Heart left ventricle (tissue), 16 donors: ENCODE measurements at regions of chr6 and their contacts with region 1.

Region 1: GRCh38 chr6:158231551-158232315 is 63.6 kb downstream of the GTF2H5 start:
- DNase-seq: peak; percentile 75 to 88 (median 78)
- ATAC-seq: peak; percentile 52 to 84 (median 72)
- H3K4me3 ChIP-seq: peak overlapping the region; percentile 54 to 95 (median 77)
- H3K27ac ChIP-seq: peak overlapping the region; percentile 63 to 92 (median 82)
- H3K4me1 ChIP-seq: peaks cover 0 to 22% (median 15%) of the 10 kb centered on the region in 12 donors
- H3K27me3 ChIP-seq: no peaks in the 10 kb centered on the region
- CTCF ChIP-seq: no peak
- POLR2A ChIP-seq: no peak

Region 2: DNA sequence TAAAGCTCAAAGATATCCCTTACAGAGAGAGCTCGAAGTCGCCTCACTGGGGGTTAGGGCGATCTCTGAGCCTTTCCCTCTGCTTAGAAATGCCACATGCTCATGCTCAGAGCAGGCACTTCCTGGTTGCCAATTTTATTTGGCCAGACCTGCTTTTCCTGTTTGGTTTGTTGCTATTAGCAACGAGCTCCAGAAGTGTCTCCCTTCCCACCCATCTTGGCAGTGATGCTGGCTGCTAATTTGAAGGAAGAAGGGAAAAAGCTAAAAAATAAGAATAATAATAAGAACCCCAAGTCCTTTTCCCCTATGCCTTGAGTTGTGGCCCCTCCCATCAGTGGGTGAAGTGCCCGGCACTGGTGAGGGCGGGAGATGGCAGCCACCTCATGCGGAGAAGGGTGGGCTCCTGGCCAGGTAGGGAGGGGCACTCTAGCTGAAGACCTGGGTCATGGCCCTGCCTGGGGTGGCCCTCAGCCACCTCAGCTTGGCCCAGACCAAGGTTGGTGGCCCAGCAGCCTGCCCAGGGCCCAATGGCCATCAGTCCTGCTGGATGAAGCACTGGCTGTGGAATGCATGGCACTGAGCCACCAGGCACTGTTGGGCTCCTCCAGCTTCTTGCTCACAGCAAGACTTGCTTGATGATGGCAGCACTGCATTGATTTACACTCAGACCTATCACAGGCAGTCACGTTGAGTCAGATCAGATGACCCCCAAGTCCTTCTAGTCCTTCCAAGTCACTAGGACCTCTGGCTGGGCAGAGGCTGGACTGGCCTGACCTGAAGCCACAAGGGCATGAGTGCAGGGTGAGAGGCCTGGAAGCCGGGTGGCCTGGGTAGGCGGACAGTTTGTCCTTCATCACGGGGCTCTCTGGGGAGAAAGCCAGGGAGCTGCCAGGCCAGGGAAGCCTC is 171.0 kb before region 1 on chr6:
- intact Hi-C with region 1: no loop called
- DNase-seq: peak; percentile 78 to 91 (median 88)
- ATAC-seq: peak; percentile 73 to 87 (median 84)
- H3K4me3 ChIP-seq: peak overlapping the region in 4 of 12 donors; percentile 2 to 27 (median 8)
- H3K27ac ChIP-seq: peak overlapping the region; percentile 14 to 94 (median 79)
- H3K4me1 ChIP-seq: peaks cover 12 to 51% (median 24%) of the 10 kb centered on the region in 12 donors
- H3K27me3 ChIP-seq: no peaks in the 10 kb centered on the region
- CTCF ChIP-seq: no peak
- POLR2A ChIP-seq: no peak

Region 3: DNA sequence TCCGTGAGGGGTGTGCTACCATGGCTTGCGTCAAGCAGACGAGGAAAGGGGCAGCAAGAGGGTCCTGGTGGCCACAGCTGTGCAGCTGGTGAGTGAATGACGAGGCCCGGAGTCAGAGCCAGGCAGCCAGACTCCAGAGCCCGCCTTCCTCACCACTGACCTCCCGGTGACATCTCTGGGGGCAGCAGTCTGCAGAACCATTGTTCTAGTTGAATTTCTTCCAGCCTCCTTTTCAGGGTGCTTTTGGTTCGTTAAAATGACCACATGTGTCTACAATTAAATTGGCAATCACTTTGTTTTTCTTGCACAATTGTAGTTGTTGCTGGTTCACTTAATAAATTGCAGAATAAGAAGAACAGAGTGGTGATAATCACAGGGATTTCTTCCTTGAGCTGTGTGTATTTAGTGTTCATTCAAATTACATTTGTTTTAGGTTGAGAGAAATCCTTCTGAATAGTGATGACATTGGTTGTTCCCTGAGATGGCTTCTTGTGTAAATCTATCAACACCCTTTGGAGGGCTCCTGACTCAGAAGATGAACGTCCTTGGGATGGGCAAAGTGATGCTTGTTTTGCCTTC is 176.9 kb after region 1 on chr6:
- intact Hi-C with region 1: loop called in 2 of 10 experiments (anchors 5 to 10 kb)
- DNase-seq: peak; percentile 69 to 85 (median 82)
- ATAC-seq: peak; percentile 45 to 93 (median 90)
- H3K4me3 ChIP-seq: no peak overlapping the region
- H3K27ac ChIP-seq: peak overlapping the region in 10 of 12 donors; percentile 10 to 71 (median 52)
- H3K4me1 ChIP-seq: peaks cover 0 to 40% (median 27%) of the 10 kb centered on the region in 12 donors
- H3K27me3 ChIP-seq: no peaks in the 10 kb centered on the region
- CTCF ChIP-seq: no peak
- POLR2A ChIP-seq: no peak

Region 4: GRCh38 chr6:158528826-158529225 is 297.1 kb after region 1 on chr6:
- intact Hi-C with region 1: no loop called
- DNase-seq: no peak
- ATAC-seq: no peak
- H3K4me3 ChIP-seq: no peak overlapping the region
- H3K27ac ChIP-seq: no peak overlapping the region
- H3K4me1 ChIP-seq: no peaks in the 10 kb centered on the region
- H3K27me3 ChIP-seq: peaks cover 0 to 19% (median 5%) of the 10 kb centered on the region in 9 donors
- CTCF ChIP-seq: no peak
- POLR2A ChIP-seq: no peak

Region 5: GRCh38 chr6:158605266-158605878 is 373.6 kb after region 1 on chr6:
- intact Hi-C with region 1: loop called in 2 of 10 experiments (anchors 5 to 10 kb)
- DNase-seq: peak in 1 of 5 donors; percentile 48
- ATAC-seq: peak in 3 of 4 donors; percentile 38 to 63 (median 60)
- H3K4me3 ChIP-seq: no peak overlapping the region
- H3K27ac ChIP-seq: no peak overlapping the region
- H3K4me1 ChIP-seq: peaks cover 0 to 11% (median 6%) of the 10 kb centered on the region in 12 donors
- H3K27me3 ChIP-seq: no peaks in the 10 kb centered on the region
- CTCF ChIP-seq: peak; percentile 58 to 81 (median 70)
- POLR2A ChIP-seq: no peak